H1 (cell line): ENCODE measurements at regions of chr9 and their contacts with region 1.

Region 1: DNA sequence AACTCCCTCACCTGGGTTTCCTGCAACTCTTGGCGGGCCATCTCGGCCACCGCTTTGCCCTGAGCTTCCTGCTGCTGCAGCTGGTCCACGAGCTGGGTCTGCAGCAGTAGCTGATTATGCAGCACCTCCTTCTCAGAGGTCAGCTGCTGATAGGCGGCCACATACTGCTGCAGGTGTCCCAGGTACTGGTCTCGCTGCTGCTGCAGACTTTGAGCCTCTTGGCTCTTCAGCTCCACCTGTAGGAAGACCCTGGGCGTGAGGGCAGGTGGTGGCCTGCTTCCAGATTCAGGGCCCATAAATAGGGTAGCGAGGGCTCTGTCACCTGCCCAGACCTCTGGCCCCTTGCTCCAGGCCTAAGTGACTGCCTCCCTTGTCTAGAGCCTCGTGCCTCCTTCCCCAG is 16.7 kb downstream of the GOLGA2 start:
- DNase-seq: peak in 1 of 2 experiments; percentile 69
- H3K4me3 ChIP-seq: no peak overlapping the region
- H3K27ac ChIP-seq: no peak overlapping the region
- H3K4me1 ChIP-seq: peaks cover 0 to 3% (median 1%) of the 10 kb centered on the region in 4 experiments; a peak in 2 of 7 replicates
- H3K27me3 ChIP-seq: no peaks in the 10 kb centered on the region
- CTCF ChIP-seq: peak in 2 of 3 experiments; percentile 62 to 63; a peak in 3 of 4 replicates
- EP300 ChIP-seq: no peak
- POLR2A ChIP-seq: no peak
- RAD21 ChIP-seq: peak in 1 of 2 experiments; percentile 51; a peak in 2 of 4 replicates

Region 2: DNA sequence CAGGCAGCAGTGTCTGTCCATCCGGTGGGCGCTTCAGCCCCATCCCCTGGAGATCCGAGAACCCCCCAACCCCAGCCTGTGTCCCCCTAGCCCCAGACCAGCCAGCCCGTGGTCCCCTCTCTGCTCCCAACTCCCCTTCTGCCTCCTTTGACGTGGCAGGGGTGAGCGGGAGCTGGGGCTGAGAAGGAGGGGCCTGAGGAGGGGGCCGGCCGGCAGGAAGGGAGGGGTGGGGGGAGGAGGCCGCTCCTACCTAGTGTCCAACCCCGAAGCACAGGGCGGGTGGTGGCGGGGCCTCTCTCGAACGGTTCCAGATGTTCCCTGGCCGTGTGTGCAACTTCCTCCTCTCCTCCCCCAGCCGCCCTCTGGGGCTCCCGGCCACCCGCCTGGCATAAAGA is 14.3 kb before region 1 on chr9:
- CTCF ChIA-PET with region 1: interaction called, 22 read pairs
- POLR2A ChIA-PET with region 1: interaction called, 16 read pairs
- DNase-seq: no peak
- H3K4me3 ChIP-seq: no peak overlapping the region; a peak in 1 of 8 replicates
- H3K27ac ChIP-seq: no peak overlapping the region
- H3K4me1 ChIP-seq: peaks cover 3 to 19% (median 10%) of the 10 kb centered on the region in 4 experiments
- H3K27me3 ChIP-seq: no peaks in the 10 kb centered on the region; a peak in 1 of 7 replicates
- CTCF ChIP-seq: no peak
- EP300 ChIP-seq: no peak
- POLR2A ChIP-seq: no peak
- RAD21 ChIP-seq: no peak